ENCODE measurements at regions of chr15 and their contacts with region 1.

Region 1: DNA sequence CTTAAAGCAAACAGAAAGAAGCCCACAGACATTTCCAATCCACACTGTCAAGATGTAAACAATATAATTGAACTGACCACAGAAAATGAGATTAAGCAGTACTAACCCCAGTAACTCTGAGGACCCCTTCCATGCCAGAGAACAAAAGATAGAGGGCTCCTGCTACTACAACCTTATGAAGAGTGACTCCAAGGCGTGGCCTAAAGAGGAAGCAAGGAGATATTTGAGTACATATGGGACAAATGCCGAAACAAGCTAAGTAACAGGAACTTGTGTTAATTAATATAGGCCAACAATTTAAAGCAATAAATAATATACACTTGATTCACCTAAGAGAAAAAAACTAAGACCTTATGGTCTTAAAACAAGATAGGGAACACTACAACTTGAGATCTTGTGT is 25.0 kb upstream of the VPS39 start:
- DNase-seq: no peak
- H3K4me3 ChIP-seq: no peak overlapping the region
- H3K27ac ChIP-seq: no peak overlapping the region
- H3K4me1 ChIP-seq: no peaks in the 10 kb centered on the region
- CTCF ChIP-seq: no peak

Region 2: GRCh38 chr15:42199126-42199525 is 34.0 kb before region 1 on chr15:
- CTCF ChIA-PET with region 1: no interaction called
- POLR2A ChIA-PET with region 1: no interaction called
- intact Hi-C with region 1: loop called (anchors 1 kb)
- DNase-seq: no peak
- H3K4me3 ChIP-seq: no peak overlapping the region
- H3K27ac ChIP-seq: no peak overlapping the region
- H3K4me1 ChIP-seq: no peaks in the 10 kb centered on the region
- CTCF ChIP-seq: no peak

Region 3: GRCh38 chr15:42444415-42445063 is 211.4 kb after region 1 on chr15:
- CTCF ChIA-PET with region 1: no interaction called
- POLR2A ChIA-PET with region 1: no interaction called
- intact Hi-C with region 1: no loop called
- DNase-seq: no peak
- H3K4me3 ChIP-seq: no peak overlapping the region
- H3K27ac ChIP-seq: no peak overlapping the region
- H3K4me1 ChIP-seq: no peaks in the 10 kb centered on the region
- CTCF ChIP-seq: no peak